Dorsolateral prefrontal cortex (tissue), 120 donors: ENCODE measurements at regions of chr7 and their contacts with region 1.

Region 1: DNA sequence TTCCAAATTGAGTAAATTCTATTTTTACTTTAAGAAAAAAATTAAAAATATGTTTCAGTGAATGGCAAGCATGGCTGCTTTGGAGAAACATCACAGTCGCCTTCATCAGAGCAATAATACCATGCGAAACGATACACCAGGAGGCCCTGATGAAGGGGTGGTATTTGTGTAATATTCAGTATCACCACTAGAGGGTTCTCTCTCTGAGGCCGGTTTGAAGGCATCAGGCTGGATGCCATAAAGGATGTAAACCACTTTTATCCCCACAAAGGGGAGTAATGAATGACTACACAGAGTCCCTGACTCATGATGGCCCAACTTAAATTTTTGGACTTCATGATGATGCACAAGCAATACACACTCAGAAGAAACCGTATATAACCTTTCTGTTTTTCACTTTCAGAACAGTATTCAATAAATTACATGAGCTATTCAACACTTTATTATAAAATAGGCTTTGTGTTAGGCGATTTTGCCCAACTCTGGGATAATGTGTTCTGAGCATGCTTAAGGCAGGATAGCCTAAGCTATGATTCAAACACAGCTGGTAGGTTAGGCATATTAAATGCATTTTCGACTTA is 95.5 kb downstream of the PPP1R17 start:
- DNase-seq: no peak
- H3K4me3 ChIP-seq: no peak overlapping the region
- H3K27ac ChIP-seq: peak overlapping the region in 36 of 59 donors; percentile 1 to 81 (median 58)
- H3K27me3 ChIP-seq: no peaks in the 10 kb centered on the region
- CTCF ChIP-seq: peak; percentile 54 to 90 (median 82)

Region 2: DNA sequence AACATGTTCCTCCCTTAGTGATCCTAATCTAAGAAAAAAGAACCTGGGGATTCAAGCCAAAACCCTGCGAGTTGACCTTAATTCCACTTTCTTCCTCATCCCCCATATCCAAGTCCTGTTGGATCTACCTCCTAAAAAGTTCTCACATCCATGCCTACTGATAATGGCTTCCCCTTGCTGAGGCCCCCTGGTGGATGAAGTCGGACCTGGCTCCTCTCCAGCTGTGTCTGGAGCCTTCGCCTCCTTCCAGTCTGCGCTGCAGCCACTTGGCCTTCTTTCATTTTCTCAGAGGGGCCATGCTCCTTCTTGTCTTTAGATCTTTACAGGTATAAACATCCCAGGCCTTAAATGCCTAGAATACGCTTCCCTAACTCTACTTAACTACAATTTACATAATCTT is 279.6 kb after region 1 on chr7:
- intact Hi-C with region 1: loop called (anchors 5 to 10 kb)
- DNase-seq: peak in 4 of 10 donors; percentile 53 to 71 (median 68)
- H3K4me3 ChIP-seq: peak overlapping the region in 12 of 59 donors; percentile 1 to 28 (median 14)
- H3K27ac ChIP-seq: peak overlapping the region in 51 of 59 donors; percentile 0 to 100 (median 81)
- H3K27me3 ChIP-seq: peaks cover 0 to 2% (median 0%) of the 10 kb centered on the region in 45 donors
- CTCF ChIP-seq: peak in 50 of 56 donors; percentile 13 to 66 (median 50)

Region 3: DNA sequence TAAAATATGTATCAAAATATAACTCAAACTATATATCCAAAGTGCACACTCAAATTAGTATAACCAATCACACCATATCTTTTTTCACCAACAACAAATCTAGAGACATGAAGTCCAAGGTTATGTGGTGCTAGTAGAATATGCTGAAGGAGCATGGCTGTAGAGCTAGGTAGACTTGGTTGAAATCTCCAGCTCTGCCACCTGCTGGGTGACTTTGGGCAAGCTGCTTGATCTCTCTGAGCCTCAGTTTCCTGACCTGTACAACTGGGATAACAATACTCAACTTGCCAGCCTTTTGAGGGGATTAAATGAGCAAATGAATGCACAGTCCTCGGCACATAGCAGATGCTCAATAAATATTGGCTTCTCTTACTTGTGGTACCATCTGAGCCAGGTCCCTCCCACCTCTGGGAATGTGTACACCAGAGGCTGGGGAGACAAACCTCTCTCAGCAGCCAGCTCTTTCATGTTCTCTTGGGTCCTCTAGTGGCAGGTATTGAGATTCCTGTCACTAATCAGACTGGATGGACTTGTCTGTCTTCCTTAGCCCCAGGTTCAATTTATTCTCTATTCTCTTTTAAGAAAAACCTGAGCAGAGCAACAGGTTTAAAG is 382.0 kb after region 1 on chr7:
- intact Hi-C with region 1: loop called in 1 of 2 experiments (anchors 10 kb)
- DNase-seq: peak in 1 of 10 donors; percentile 28
- H3K4me3 ChIP-seq: no peak overlapping the region
- H3K27ac ChIP-seq: peak overlapping the region in 4 of 59 donors; percentile 28 to 63 (median 44)
- H3K27me3 ChIP-seq: no peaks in the 10 kb centered on the region
- CTCF ChIP-seq: peak; percentile 12 to 77 (median 54)